ENCODE measurements at regions of chr5 and their contacts with region 1.

Region 1: DNA sequence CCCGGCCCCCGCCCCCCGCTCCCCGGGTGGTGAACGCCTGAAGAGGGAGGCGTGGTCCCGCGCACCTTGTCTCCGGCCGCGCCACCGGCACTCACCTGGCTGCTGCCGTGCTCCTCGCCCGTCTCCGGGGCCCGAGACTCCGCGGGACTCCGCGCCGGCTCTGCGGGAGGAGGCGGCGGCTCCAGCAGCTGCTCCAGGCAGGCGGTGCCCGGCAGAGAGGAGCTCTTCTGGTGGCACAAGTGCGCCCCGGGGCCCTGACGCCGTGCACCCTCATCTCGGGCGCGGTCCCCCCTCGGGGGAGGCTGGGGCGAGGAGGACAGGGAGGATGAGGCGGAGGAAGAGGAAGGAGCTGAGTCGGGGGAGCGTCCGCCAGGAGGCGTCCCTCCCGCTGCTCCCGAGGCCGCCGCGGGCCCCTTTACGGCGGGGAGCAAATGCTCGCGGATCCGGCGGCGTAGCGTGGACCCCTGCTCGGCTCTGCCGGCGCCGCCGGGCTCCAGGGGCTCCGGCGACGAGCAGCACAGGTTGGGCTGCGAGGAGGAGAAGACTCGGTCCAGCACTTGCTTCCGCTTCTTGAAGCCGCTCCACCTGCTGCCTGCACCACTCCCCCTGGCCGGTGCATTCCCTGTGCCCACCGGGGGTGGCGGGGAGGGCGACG is 1.0 kb downstream of the MCTP1 start:
- DNase-seq: peak; percentile 36 to 57 (median 41)
- ATAC-seq: peak; percentile 91
- H3K4me3 ChIP-seq: peak overlapping the region; percentile 43
- H3K27ac ChIP-seq: no peak overlapping the region
- H3K4me1 ChIP-seq: peaks cover 0 to 17% of the 10 kb centered on the region in 2 experiments; a peak in 2 of 5 replicates
- H3K27me3 ChIP-seq: peaks cover 20 to 22% of the 10 kb centered on the region in 2 experiments
- CTCF ChIP-seq: peak; percentile 43 to 57 (median 46); a peak in 5 of 6 replicates
- EP300 ChIP-seq: no peak
- POLR2A ChIP-seq: no peak
- RAD21 ChIP-seq: peak; percentile 30 to 62

Region 2: GRCh38 chr5:95251185-95251584 is 32.7 kb before region 1 on chr5:
- CTCF ChIA-PET with region 1: no interaction called
- POLR2A ChIA-PET with region 1: no interaction called
- in situ Hi-C with region 1: no loop called
- intact Hi-C with region 1: loop called (anchors 1 kb)
- DNase-seq: no peak
- ATAC-seq: no peak
- H3K4me3 ChIP-seq: no peak overlapping the region
- H3K27ac ChIP-seq: no peak overlapping the region
- H3K4me1 ChIP-seq: no peaks in the 10 kb centered on the region
- H3K27me3 ChIP-seq: no peaks in the 10 kb centered on the region
- CTCF ChIP-seq: no peak
- EP300 ChIP-seq: no peak
- POLR2A ChIP-seq: no peak
- RAD21 ChIP-seq: no peak

Region 3: GRCh38 chr5:95304711-95305110 is 20.8 kb after region 1 on chr5:
- CTCF ChIA-PET with region 1: no interaction called
- POLR2A ChIA-PET with region 1: no interaction called
- in situ Hi-C with region 1: no loop called
- intact Hi-C with region 1: no loop called
- DNase-seq: no peak
- ATAC-seq: no peak
- H3K4me3 ChIP-seq: no peak overlapping the region
- H3K27ac ChIP-seq: no peak overlapping the region
- H3K4me1 ChIP-seq: no peaks in the 10 kb centered on the region
- H3K27me3 ChIP-seq: no peaks in the 10 kb centered on the region
- CTCF ChIP-seq: no peak
- EP300 ChIP-seq: no peak
- POLR2A ChIP-seq: no peak
- RAD21 ChIP-seq: no peak

Region 4: GRCh38 chr5:95781101-95781583 is 497.3 kb after region 1 on chr5:
- CTCF ChIA-PET with region 1: no interaction called
- POLR2A ChIA-PET with region 1: no interaction called
- in situ Hi-C with region 1: no loop called
- intact Hi-C with region 1: loop called (anchors 10 kb)
- DNase-seq: peak in 3 of 4 experiments; percentile 35 to 79 (median 59)
- ATAC-seq: peak; percentile 97
- H3K4me3 ChIP-seq: no peak overlapping the region
- H3K27ac ChIP-seq: no peak overlapping the region
- H3K4me1 ChIP-seq: no peaks in the 10 kb centered on the region; a peak in 1 of 5 replicates
- H3K27me3 ChIP-seq: no peaks in the 10 kb centered on the region
- CTCF ChIP-seq: peak; percentile 84 to 97 (median 92)
- EP300 ChIP-seq: no peak
- POLR2A ChIP-seq: no peak; the same call in 1 of the 2 replicates
- RAD21 ChIP-seq: peak; percentile 89 to 93

Measured in K562 (cell line).